ENCODE measurements at regions of chr16 and their contacts with region 1.

Region 1: GRCh38 chr16:56525236-56525635 is 5.4 kb upstream of the BBS2 start:
- DNase-seq: no peak
- ATAC-seq: no peak
- H3K4me3 ChIP-seq: no peak overlapping the region
- H3K27ac ChIP-seq: no peak overlapping the region
- H3K4me1 ChIP-seq: peaks cover 4% of the 10 kb centered on the region; the same call in 2 of the 3 replicates
- CTCF ChIP-seq: no peak
- EP300 ChIP-seq: no peak
- POLR2A ChIP-seq: no peak
- RAD21 ChIP-seq: no peak

Region 2: DNA sequence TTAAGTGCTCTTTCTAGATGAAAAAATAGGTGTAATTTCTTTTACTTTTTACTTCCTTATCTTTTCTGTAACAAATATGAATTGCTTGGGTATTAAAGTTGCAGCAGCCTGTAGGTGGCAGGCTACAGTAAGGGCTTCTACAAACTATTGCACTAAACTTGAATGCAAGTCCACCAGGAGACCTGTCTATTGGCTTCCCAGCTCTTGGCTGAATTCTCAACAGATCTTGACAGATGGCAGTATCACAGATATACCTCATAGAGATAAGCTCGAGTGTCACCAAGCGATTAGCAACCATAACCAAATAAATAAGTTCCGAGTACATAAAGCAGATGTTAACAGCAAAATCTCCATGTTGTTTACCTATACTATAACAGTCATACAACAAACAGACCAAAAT is 11.3 kb before region 1 on chr16:
- CTCF ChIA-PET with region 1: interaction called, 14 read pairs
- POLR2A ChIA-PET with region 1: no interaction called
- DNase-seq: peak; percentile 51 to 81
- ATAC-seq: peak; percentile 89 to 95
- H3K4me3 ChIP-seq: no peak overlapping the region
- H3K27ac ChIP-seq: no peak overlapping the region
- H3K4me1 ChIP-seq: peaks cover 7% of the 10 kb centered on the region; the same call in 2 of the 3 replicates
- CTCF ChIP-seq: peak; percentile 85
- EP300 ChIP-seq: no peak
- POLR2A ChIP-seq: no peak
- RAD21 ChIP-seq: peak; percentile 74 to 75

Measured in A549 (cell line).